ENCODE measurements at regions of chr3 and their contacts with region 1.

Region 1: DNA sequence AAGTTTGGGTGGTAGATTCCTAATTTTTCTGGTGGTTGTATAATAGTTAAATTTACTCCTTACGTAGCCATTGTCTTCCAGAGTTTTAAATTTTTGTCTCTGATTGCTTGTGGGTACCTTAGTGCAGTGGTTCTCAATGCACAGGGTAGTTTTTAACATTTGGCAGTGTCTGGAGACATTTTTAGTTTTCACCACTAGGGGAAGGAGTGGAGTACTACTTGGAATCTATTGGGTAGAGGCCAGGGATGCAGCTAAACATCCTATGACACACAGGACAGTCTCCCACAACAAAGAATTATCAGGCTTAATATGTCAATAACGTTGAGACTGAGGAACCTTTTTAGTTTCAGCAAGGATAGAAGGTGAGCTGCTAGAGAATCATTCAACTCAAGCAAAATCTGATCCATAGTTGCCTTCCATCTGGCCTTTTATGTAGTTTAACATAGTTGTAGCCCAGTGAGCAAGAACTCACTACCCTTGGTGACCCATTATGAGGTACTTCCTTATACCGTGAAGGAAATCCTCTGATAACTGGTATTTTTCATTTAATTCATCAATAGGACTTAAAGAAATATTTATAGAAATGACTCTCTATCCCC is 8.6 kb upstream of the STX19 start:
- DNase-seq: no peak
- ATAC-seq: peak; percentile 92
- H3K4me3 ChIP-seq: no peak overlapping the region
- H3K27ac ChIP-seq: no peak overlapping the region
- H3K4me1 ChIP-seq: no peaks in the 10 kb centered on the region
- H3K27me3 ChIP-seq: no peaks in the 10 kb centered on the region
- CTCF ChIP-seq: peak; percentile 43 to 59 (median 50)
- EP300 ChIP-seq: no peak
- POLR2A ChIP-seq: no peak
- RAD21 ChIP-seq: 0 out of 2 replicates have a peak, but pooled peaks have one; percentile 15

Region 2: DNA sequence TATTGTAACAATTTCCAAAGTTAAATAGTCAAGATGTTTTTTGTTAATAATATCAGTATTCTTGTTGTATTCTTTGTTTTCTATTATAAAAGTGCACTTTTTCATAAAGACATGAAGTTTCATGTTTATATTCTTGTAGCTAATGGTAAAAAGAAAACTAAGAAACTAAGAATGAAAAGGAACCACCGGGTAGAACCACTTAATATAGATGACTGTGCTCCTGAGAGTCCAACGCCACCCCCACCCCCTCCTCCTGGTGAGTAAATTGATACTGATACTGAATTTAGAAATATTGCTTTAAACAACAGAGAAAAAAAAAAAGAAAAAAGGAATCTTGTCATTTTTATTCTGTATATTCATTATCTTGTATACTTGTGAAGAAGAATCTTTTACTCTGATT is 12.3 kb after region 1 on chr3:
- CTCF ChIA-PET with region 1: interaction called, 12 read pairs
- POLR2A ChIA-PET with region 1: no interaction called
- RAD21 ChIA-PET with region 1: no interaction called
- SMC1A ChIA-PET with region 1: interaction called, 3 read pairs
- in situ Hi-C with region 1: no loop called
- intact Hi-C with region 1: no loop called
- DNase-seq: no peak
- ATAC-seq: no peak
- H3K4me3 ChIP-seq: no peak overlapping the region
- H3K27ac ChIP-seq: no peak overlapping the region
- H3K4me1 ChIP-seq: no peaks in the 10 kb centered on the region
- H3K27me3 ChIP-seq: no peaks in the 10 kb centered on the region
- CTCF ChIP-seq: no peak
- EP300 ChIP-seq: no peak
- POLR2A ChIP-seq: no peak
- RAD21 ChIP-seq: no peak

Measured in GM12878 (cell line).